ENCODE measurements at regions of chr10 and their contacts with region 1.

Region 1: DNA sequence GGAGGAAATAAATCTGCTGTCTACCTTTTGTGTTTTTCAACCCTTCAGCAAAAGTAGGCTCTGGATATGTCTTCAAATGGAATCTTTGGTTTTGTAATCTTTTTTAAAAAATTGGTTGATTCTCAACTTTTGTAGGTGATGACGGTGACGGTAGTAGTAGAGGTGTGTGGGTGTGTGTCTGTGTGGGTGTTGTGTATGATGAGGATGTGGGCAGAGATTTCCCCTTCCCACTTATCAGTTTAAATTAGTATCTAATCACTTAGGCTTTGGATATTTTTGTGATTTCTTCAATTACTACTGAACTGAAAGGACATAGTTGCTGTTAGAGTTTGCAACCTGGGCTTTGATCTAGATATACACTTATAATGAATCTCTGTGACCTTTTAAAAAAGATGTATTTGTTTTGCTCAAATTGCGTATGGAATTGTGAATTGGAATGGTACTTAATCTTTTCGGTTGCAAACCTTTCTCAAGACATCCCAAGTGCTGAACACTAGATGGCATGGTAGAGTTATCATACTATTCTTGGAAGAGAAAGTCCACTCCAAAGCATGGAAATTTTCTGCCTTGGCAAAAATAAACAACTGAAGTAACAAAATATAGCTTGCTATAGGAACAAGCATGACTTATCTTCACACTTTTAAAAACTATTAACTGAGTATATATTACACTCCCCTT is 51.9 kb upstream of the A1CF start:
- DNase-seq: peak; percentile 13
- H3K4me3 Mint-ChIP-seq: no peak overlapping the region
- H3K27ac Mint-ChIP-seq: no peak overlapping the region
- H3K4me1 Mint-ChIP-seq: no peaks in the 10 kb centered on the region
- H3K27me3 Mint-ChIP-seq: peaks cover 38% of the 10 kb centered on the region
- CTCF ChIP-seq: peak; percentile 24

Region 2: GRCh38 chr10:50988792-50989191 is 51.4 kb after region 1 on chr10:
- CTCF ChIA-PET with region 1: no interaction called
- intact Hi-C with region 1: loop called (anchors 2 kb)
- DNase-seq: no peak
- H3K4me3 Mint-ChIP-seq: no peak overlapping the region
- H3K27ac Mint-ChIP-seq: no peak overlapping the region
- H3K4me1 Mint-ChIP-seq: peaks cover 24% of the 10 kb centered on the region
- H3K27me3 Mint-ChIP-seq: peaks cover 27% of the 10 kb centered on the region
- CTCF ChIP-seq: no peak

Region 3: GRCh38 chr10:51047857-51048256 is 110.5 kb after region 1 on chr10:
- CTCF ChIA-PET with region 1: no interaction called
- intact Hi-C with region 1: loop called (anchors 5 kb)
- DNase-seq: no peak
- H3K4me3 Mint-ChIP-seq: no peak overlapping the region
- H3K27ac Mint-ChIP-seq: no peak overlapping the region
- H3K4me1 Mint-ChIP-seq: peaks cover 9% of the 10 kb centered on the region
- H3K27me3 Mint-ChIP-seq: peaks cover 16% of the 10 kb centered on the region
- CTCF ChIP-seq: no peak